ENCODE measurements at regions of chr10 and their contacts with region 1.

Region 1: GRCh38 chr10:26540601-26541000 is 102.5 kb downstream of the APBB1IP start:
- DNase-seq: peak in 1 of 9 experiments; percentile 37
- ATAC-seq: no peak
- H3K4me3 ChIP-seq: no peak overlapping the region
- H3K4me3 Mint-ChIP-seq: no peak overlapping the region
- H3K27ac ChIP-seq: peak overlapping the region in 1 of 2 experiments; percentile 4
- H3K27ac Mint-ChIP-seq: peak overlapping the region; percentile 62
- H3K4me1 ChIP-seq: peaks cover 9% of the 10 kb centered on the region
- H3K4me1 Mint-ChIP-seq: peaks cover 25% of the 10 kb centered on the region
- H3K27me3 ChIP-seq: no peaks in the 10 kb centered on the region
- H3K27me3 Mint-ChIP-seq: no peaks in the 10 kb centered on the region
- CTCF ChIP-seq: no peak

Region 2: DNA sequence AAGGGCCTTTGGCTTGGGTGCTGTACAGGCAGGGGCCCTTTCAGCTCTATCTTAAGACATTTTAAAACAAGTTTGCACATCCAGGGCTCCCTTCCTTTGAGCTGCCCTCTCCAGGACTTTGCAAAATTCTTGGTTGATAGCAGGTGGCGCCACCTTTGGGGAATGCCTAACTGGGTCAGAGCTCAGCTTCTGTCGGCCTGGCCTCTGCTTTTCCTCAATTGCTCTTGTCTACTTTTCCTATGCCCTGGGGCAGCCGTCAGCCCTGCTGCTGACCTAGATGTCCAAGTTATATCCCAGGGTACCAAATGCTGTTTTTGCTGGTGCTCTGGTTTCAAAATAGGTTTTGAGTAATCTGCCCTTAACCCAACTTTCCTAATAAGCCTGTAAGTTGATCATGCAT is 36.7 kb before region 1 on chr10:
- CTCF ChIA-PET with region 1: no interaction called
- POLR2A ChIA-PET with region 1: no interaction called
- intact Hi-C with region 1: loop called in 1 of 2 experiments (anchors 5 kb)
- DNase-seq: peak in 6 of 9 experiments; percentile 27 to 53 (median 42)
- ATAC-seq: peak; percentile 48
- H3K4me3 ChIP-seq: no peak overlapping the region
- H3K4me3 Mint-ChIP-seq: no peak overlapping the region
- H3K27ac ChIP-seq: no peak overlapping the region
- H3K27ac Mint-ChIP-seq: peak overlapping the region; percentile 43
- H3K4me1 ChIP-seq: no peaks in the 10 kb centered on the region
- H3K4me1 Mint-ChIP-seq: peaks cover 31% of the 10 kb centered on the region
- H3K27me3 ChIP-seq: no peaks in the 10 kb centered on the region
- H3K27me3 Mint-ChIP-seq: no peaks in the 10 kb centered on the region
- CTCF ChIP-seq: peak; percentile 14

Region 3: DNA sequence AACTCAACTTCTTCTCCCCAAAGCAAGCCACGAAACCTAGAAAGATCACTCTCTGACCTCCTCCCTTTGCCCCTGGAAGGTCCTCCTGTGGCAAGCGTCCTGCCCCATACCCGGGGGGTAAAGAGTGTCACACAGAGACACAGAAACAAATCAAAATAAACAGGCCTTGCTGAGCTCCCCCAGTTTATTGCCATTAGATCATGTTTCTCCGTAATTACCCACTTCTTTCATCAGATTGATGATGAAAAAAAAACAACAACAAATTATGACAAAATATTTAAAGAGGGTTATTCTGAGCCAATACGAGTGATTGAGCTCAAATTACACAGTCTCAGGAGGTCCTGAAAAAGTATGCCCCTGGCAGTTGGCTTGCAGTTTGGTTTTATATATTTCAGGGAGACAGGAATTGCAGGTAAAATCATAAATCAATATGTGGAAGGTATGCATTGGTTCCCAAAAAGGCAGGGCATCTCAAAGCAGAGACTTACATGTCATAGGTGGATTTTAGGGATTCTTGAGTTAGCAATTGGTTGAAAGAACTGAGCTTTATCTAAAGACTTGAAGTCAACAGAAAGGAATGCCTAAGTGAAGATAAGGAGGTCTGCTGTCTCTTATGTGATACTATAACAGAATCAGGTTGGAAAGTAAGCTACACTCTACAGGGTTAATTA is 16.3 kb before region 1 on chr10:
- CTCF ChIA-PET with region 1: no interaction called
- POLR2A ChIA-PET with region 1: no interaction called
- intact Hi-C with region 1: loop called in 1 of 2 experiments (anchors 2 kb)
- DNase-seq: no peak
- ATAC-seq: no peak
- H3K4me3 ChIP-seq: no peak overlapping the region
- H3K4me3 Mint-ChIP-seq: no peak overlapping the region
- H3K27ac ChIP-seq: no peak overlapping the region
- H3K27ac Mint-ChIP-seq: peak overlapping the region; percentile 65
- H3K4me1 ChIP-seq: peaks cover 5% of the 10 kb centered on the region
- H3K4me1 Mint-ChIP-seq: peaks cover 47% of the 10 kb centered on the region
- H3K27me3 ChIP-seq: no peaks in the 10 kb centered on the region
- H3K27me3 Mint-ChIP-seq: no peaks in the 10 kb centered on the region
- CTCF ChIP-seq: no peak

Region 4: GRCh38 chr10:26799342-26799741 is 258.7 kb after region 1 on chr10:
- CTCF ChIA-PET with region 1: no interaction called
- POLR2A ChIA-PET with region 1: no interaction called
- intact Hi-C with region 1: no loop called
- DNase-seq: peak in 2 of 9 experiments; percentile 16 to 48
- ATAC-seq: no peak
- H3K4me3 ChIP-seq: no peak overlapping the region
- H3K4me3 Mint-ChIP-seq: peak overlapping the region; percentile 46
- H3K27ac ChIP-seq: peak overlapping the region in 1 of 2 experiments; percentile 30
- H3K27ac Mint-ChIP-seq: peak overlapping the region; percentile 20
- H3K4me1 ChIP-seq: peaks cover 17% of the 10 kb centered on the region
- H3K4me1 Mint-ChIP-seq: peaks cover 73% of the 10 kb centered on the region
- H3K27me3 ChIP-seq: no peaks in the 10 kb centered on the region
- H3K27me3 Mint-ChIP-seq: no peaks in the 10 kb centered on the region
- CTCF ChIP-seq: no peak

Region 5: GRCh38 chr10:26829810-26830515 is 289.4 kb after region 1 on chr10:
- CTCF ChIA-PET with region 1: no interaction called
- POLR2A ChIA-PET with region 1: no interaction called
- intact Hi-C with region 1: no loop called
- DNase-seq: no peak
- ATAC-seq: no peak
- H3K4me3 ChIP-seq: no peak overlapping the region
- H3K4me3 Mint-ChIP-seq: peak overlapping the region; percentile 38
- H3K27ac ChIP-seq: peak overlapping the region in 1 of 2 experiments; percentile 5
- H3K27ac Mint-ChIP-seq: peak overlapping the region; percentile 76
- H3K4me1 ChIP-seq: peaks cover 20% of the 10 kb centered on the region
- H3K4me1 Mint-ChIP-seq: peaks cover 62% of the 10 kb centered on the region
- H3K27me3 ChIP-seq: no peaks in the 10 kb centered on the region
- H3K27me3 Mint-ChIP-seq: no peaks in the 10 kb centered on the region
- CTCF ChIP-seq: no peak

Measured in CD8-positive, alpha-beta T cell (primary cell).